Heart right ventricle (tissue), 16 donors: ENCODE measurements at regions of chr16 and their contacts with region 1.

Region 1: GRCh38 chr16:35559911-35560636 is 2100.7 kb downstream of the TP53TG3F start:
- DNase-seq: no peak
- ATAC-seq: no peak
- H3K4me3 ChIP-seq: no peak overlapping the region
- H3K27ac ChIP-seq: no peak overlapping the region
- H3K4me1 ChIP-seq: no peaks in the 10 kb centered on the region
- H3K27me3 ChIP-seq: no peaks in the 10 kb centered on the region
- CTCF ChIP-seq: peak in 5 of 9 donors; percentile 13 to 42 (median 40)

Region 2: GRCh38 chr16:35492225-35492624 is 67.8 kb before region 1 on chr16:
- intact Hi-C with region 1: loop called in 2 of 10 experiments (anchors 10 kb)
- DNase-seq: no peak
- ATAC-seq: no peak
- H3K4me3 ChIP-seq: no peak overlapping the region
- H3K27ac ChIP-seq: no peak overlapping the region
- H3K4me1 ChIP-seq: no peaks in the 10 kb centered on the region
- H3K27me3 ChIP-seq: peaks cover 0 to 8% (median 0%) of the 10 kb centered on the region in 7 donors
- CTCF ChIP-seq: no peak

Region 3: GRCh38 chr16:35524004-35524403 is 36.1 kb before region 1 on chr16:
- intact Hi-C with region 1: loop called in 1 of 10 experiments (anchors 5 kb)
- DNase-seq: no peak
- ATAC-seq: no peak
- H3K4me3 ChIP-seq: no peak overlapping the region
- H3K27ac ChIP-seq: no peak overlapping the region
- H3K4me1 ChIP-seq: no peaks in the 10 kb centered on the region
- H3K27me3 ChIP-seq: peaks cover 0 to 9% (median 0%) of the 10 kb centered on the region in 7 donors
- CTCF ChIP-seq: no peak

Region 4: DNA sequence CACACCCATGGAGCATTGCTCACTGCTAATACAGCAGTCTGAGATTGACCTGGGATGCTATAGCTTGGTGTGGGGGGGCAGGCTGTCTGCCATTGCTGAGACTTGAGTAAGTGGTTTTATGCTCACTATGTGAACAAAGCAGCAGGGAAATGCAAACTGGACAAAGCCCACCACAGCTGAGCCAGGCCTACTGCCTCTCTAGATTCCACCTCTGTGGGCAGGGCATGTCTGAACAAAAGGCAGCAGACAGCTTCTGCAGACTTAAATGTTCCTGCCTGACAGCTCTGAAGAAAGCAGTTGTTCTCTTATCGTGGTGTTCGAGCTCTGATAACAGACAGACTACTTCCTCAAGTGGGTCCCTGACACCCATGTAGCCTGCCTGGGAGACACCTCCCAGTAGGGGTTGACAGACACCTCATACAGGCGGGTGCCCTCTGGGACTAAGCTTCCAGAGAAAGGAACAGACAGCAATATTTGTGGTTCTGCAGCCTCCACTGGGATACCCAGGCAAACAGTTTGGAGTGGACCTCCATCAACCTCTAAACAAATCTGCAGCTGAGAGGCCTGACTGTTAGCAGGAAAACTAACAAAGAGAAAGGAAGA is 104.1 kb after region 1 on chr16:
- intact Hi-C with region 1: loop called in 1 of 10 experiments (anchors 5 kb)
- DNase-seq: no peak
- ATAC-seq: no peak
- H3K4me3 ChIP-seq: no peak overlapping the region
- H3K27ac ChIP-seq: no peak overlapping the region
- H3K4me1 ChIP-seq: no peaks in the 10 kb centered on the region
- H3K27me3 ChIP-seq: no peaks in the 10 kb centered on the region
- CTCF ChIP-seq: no peak

Region 5: DNA sequence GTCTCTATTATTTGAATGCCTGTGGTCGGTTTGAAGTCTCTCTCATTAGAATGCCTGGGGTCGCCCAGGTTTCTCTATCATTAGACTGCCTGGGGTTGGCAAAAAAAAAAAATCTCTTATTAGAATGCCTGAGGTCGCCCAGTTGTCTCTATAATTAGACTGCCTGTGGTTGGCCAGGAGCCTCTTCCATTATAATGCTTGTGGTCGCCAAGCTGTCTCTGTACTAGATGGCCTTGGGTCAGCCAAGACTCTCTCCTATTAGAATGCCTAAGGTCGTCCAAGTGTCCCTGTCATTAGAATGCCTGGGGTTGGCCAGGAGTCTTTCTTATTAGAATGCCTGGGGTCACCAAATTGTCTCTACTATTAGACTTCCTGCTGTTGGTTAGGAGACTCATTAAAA is 127.7 kb after region 1 on chr16:
- intact Hi-C with region 1: no loop called
- DNase-seq: no peak
- ATAC-seq: peak in 7 of 8 donors; percentile 36 to 79 (median 59)
- H3K4me3 ChIP-seq: no peak overlapping the region
- H3K27ac ChIP-seq: peak overlapping the region in 2 of 10 donors; percentile 27 to 44
- H3K4me1 ChIP-seq: peaks cover 0 to 22% (median 5%) of the 10 kb centered on the region in 9 donors
- H3K27me3 ChIP-seq: no peaks in the 10 kb centered on the region
- CTCF ChIP-seq: no peak

Region 6: GRCh38 chr16:35706901-35707300 is 146.8 kb after region 1 on chr16:
- intact Hi-C with region 1: no loop called
- DNase-seq: no peak
- ATAC-seq: no peak
- H3K4me3 ChIP-seq: no peak overlapping the region
- H3K27ac ChIP-seq: no peak overlapping the region
- H3K4me1 ChIP-seq: peaks cover 0 to 9% (median 0%) of the 10 kb centered on the region in 9 donors
- H3K27me3 ChIP-seq: no peaks in the 10 kb centered on the region
- CTCF ChIP-seq: no peak